HEK293 (cell line): ENCODE measurements at regions of chr4 and their contacts with region 1.

Region 1: GRCh38 chr4:152500800-152501434 is 35.0 kb downstream of the FBXW7 start:
- H3K4me3 ChIP-seq: no peak overlapping the region
- H3K27ac ChIP-seq: no peak overlapping the region
- H3K4me1 ChIP-seq: 0 out of 2 replicates have a peak, but pooled peaks cover 3% of the 10 kb centered on the region
- CTCF ChIP-seq: no peak; the same call in 1 of the 2 replicates

Region 2: GRCh38 chr4:152485726-152486276 is 15.1 kb before region 1 on chr4:
- CTCF ChIA-PET with region 1: interaction called, 23 read pairs
- POLR2A ChIA-PET with region 1: no interaction called
- H3K4me3 ChIP-seq: no peak overlapping the region
- H3K27ac ChIP-seq: no peak overlapping the region; the same call in 1 of the 2 replicates
- H3K4me1 ChIP-seq: peaks cover 17% of the 10 kb centered on the region
- CTCF ChIP-seq: no peak

Region 3: DNA sequence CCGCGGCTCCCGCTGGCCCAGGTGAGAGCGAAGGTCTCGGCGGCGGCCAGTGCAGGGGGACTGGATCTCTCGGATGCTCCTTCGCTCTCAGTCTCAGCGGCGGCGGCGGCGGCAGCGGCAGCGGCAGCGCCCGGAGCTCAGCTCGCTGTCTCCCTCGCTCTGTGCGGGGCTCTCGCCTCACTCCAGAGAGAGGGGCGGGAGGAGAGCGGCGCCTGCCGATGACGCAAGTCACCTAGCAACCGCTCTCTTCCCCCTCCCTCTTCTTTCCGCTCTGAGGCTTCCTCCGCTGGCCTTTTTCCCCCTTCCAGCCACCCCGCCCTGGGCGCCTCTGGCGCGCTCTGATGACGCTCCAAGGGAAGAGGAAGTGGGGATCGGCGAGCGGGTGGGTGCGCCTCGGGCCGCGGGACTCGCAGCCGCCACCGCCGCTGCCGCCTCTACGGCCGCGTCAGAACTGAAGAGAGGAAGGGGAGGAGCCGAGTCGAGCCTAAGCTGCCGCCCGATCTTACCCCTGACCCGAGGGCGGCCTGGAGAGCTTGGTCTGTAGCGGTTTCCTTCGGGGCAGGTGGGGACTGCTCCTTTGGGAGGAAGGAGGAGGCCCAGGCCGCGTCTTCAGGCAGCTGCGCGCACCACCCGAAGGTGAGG is 35.1 kb after region 1 on chr4 and contains the start of gene FBXW7:
- CTCF ChIA-PET with region 1: interaction called, 25 read pairs
- POLR2A ChIA-PET with region 1: interaction called, 4 read pairs
- H3K4me3 ChIP-seq: peak within 1 kb of the TSS; percentile 88
- H3K27ac ChIP-seq: peak within 1 kb of the TSS; percentile 91
- H3K4me1 ChIP-seq: peaks cover 4% of the 10 kb centered on the region; the same call in 1 of the 2 replicates
- CTCF ChIP-seq: no peak

Region 4: DNA sequence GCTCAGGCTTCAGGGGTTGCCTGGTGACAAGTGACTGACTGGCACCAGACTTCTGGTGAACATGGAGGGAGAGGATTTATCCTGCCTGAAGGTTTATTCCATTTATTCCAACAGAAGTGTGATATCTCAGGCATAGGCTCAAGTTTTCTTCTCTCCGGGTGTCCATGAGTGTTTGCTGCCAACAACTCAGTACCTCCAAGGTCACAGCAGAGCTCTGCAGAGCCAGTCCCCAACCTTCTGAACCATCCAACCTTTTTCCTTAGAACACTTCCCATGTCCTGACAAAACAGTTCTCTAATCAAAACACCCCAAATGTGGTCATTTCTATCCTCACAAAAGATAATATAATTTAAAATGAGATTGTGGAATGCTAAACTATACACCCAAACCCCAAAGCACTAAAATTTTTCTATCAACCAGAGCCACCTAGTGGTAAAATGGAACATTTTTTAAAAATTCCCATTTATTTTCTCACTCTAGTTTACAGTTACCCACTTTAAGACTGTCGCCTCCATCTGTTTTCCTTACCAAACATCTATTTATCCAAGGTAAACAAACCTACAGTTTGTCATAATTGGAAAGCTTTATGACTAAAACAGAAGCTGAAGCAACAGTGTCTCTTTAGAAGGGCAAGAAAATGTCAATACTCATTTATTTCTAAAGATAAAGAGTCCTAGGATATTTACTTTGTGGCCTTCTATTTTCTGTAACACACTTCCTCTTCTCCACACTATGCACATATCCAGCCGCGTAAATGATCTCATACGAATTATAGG is 139.3 kb after region 1 on chr4:
- CTCF ChIA-PET with region 1: interaction called, 42 read pairs
- POLR2A ChIA-PET with region 1: no interaction called
- H3K4me3 ChIP-seq: no peak overlapping the region
- H3K27ac ChIP-seq: no peak overlapping the region
- H3K4me1 ChIP-seq: no peaks in the 10 kb centered on the region
- CTCF ChIP-seq: no peak

Region 5: GRCh38 chr4:152735396-152735859 is 234.5 kb after region 1 on chr4:
- CTCF ChIA-PET with region 1: interaction called, 11 read pairs
- POLR2A ChIA-PET with region 1: no interaction called
- H3K4me3 ChIP-seq: no peak overlapping the region
- H3K27ac ChIP-seq: no peak overlapping the region
- H3K4me1 ChIP-seq: no peaks in the 10 kb centered on the region
- CTCF ChIP-seq: no peak

Region 6: DNA sequence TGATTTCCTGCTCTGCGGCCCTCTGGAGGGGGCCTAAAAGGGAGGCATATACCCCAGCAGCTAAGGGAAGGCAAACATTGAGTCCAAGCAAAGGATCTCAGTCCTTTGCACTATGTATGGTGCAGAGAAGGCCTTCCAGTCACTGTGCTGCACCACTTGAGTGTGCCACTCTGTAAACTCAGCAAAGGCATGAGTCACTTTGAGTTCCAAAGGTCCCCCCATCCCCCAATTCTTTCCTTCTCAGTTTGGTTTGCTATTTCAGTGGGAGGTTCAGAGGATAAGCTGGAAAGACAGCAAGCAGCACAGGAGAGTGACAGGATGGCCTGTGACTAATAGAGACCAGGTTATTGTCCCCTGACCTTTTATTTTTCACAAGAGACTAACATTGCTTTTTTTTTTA is 566.5 kb after region 1 on chr4:
- CTCF ChIA-PET with region 1: no interaction called
- POLR2A ChIA-PET with region 1: no interaction called
- H3K4me3 ChIP-seq: no peak overlapping the region
- H3K27ac ChIP-seq: no peak overlapping the region
- H3K4me1 ChIP-seq: no peaks in the 10 kb centered on the region
- CTCF ChIP-seq: no peak